ENCODE measurements at regions of chr19 and their contacts with region 1.

Region 1: GRCh38 chr19:12796146-12797071 is 5.1 kb downstream of the JUNB start:
- DNase-seq: peak; percentile 71 to 85
- ATAC-seq: peak in 2 of 4 donors; percentile 28 to 40
- H3K4me3 ChIP-seq: no peak overlapping the region
- H3K27ac ChIP-seq: peak overlapping the region; percentile 19
- H3K4me1 ChIP-seq: peaks cover 17% of the 10 kb centered on the region
- H3K27me3 ChIP-seq: no peaks in the 10 kb centered on the region
- CTCF ChIP-seq: peak; percentile 93

Region 2: GRCh38 chr19:12722566-12723380 is 73.6 kb before region 1 on chr19:
- intact Hi-C with region 1: loop called in 1 of 2 experiments (anchors 5 kb)
- DNase-seq: peak; percentile 97 to 98
- ATAC-seq: peak; percentile 93 to 94 (median 93)
- H3K4me3 ChIP-seq: peak overlapping the region; percentile 87
- H3K27ac ChIP-seq: peak overlapping the region; percentile 92
- H3K4me1 ChIP-seq: peaks cover 27% of the 10 kb centered on the region
- H3K27me3 ChIP-seq: no peaks in the 10 kb centered on the region
- CTCF ChIP-seq: no peak

Region 3: DNA sequence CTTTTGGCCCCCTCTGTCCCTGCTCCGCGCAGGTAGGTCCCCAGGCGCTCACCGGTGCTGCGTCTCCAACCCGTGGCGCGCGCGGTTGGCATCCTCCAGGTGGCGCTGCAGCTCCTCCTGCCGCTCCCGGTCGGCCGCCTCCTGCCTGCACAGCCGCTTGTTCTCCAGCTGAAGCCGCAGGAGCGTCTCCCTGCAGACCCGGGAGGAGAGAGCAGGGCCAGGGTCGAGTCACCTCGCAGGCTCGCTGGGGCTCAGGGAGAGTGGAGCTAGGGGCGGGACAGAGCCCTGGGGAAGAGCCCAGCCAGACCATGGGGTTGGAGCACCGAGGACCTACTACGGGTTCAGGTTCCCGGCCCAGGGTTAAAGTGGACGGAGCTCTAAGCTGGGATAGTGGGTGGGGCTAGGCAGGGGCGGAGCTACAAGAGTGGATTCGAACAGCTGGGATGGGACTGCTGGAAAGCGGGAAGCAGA is 30.3 kb before region 1 on chr19:
- intact Hi-C with region 1: loop called (anchors 5 kb)
- DNase-seq: peak; percentile 76 to 89
- ATAC-seq: peak; percentile 71 to 86 (median 82)
- H3K4me3 ChIP-seq: peak overlapping the region; percentile 52
- H3K27ac ChIP-seq: peak overlapping the region; percentile 46
- H3K4me1 ChIP-seq: no peaks in the 10 kb centered on the region
- H3K27me3 ChIP-seq: no peaks in the 10 kb centered on the region
- CTCF ChIP-seq: peak; percentile 75

Region 4: DNA sequence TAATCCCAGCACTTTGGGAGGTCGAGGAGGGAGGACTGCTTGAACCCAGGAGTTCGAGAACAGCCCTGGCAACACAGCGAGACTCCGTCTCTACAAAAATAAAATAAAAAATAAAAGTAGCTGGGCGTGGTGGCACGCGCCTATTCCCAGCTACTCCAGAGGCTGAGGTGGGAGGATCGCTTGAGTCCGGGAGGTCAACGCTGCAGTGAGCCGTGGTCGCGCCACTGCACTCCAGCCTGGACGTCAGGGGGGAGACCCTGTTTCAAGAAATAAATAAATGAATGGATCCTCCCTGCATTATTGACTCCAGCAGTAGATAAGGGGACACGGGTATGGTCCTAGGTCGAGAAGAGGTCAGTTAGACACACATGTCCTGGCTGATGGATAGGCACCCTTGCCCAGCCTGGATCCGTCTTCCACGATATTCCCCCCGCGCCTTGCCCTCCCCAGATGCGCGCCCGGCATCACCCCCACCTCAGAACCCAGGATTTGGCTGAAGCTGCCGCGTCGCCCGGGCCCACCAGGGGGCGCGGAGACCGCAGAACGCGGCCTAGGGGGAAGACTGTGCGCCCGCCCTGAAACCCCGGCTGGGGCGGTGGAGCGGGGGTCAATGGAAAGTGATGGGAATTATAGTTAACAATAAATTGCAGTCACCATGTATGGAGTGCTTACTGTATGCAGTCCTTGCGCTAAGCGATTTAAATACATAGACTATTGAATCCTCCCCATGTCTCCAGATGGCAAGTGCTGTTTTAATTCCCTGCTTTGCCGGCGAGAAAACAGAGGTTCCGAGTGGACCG is 19.0 kb before region 1 on chr19:
- intact Hi-C with region 1: loop called (anchors 1 kb)
- DNase-seq: peak; percentile 84 to 88
- ATAC-seq: peak; percentile 51 to 70 (median 60)
- H3K4me3 ChIP-seq: peak overlapping the region; percentile 86
- H3K27ac ChIP-seq: peak overlapping the region; percentile 88
- H3K4me1 ChIP-seq: peaks cover 43% of the 10 kb centered on the region
- H3K27me3 ChIP-seq: no peaks in the 10 kb centered on the region
- CTCF ChIP-seq: peak; percentile 94

Measured in psoas muscle (tissue), 8 donors.